Posterior vena cava (tissue), 2 donors: ENCODE measurements at regions of chr2 and their contacts with region 1.

Region 1: GRCh38 chr2:52383541-52383940 is 1351.6 kb upstream of the NRXN1 start:
- DNase-seq: no peak

Region 2: DNA sequence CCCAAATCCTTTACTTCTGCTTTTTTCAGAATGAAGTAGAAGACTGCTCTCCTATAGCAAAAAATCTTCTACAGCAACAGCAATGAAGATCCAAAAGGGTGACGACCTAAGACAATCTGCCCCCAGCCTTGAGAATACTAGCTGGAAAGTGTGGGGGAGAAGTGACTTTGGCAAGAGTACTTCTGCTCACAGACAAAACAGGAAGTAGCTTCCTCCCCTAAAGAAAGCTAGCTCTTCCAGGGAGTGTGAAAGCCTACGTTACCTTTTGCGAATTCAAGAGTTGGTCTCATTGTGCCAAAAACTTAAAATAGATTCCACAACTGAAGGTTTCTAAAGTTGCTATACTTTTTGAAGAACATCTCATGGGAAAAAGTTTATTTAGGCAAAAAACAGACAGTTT is 314.9 kb after region 1 on chr2:
- intact Hi-C with region 1: loop called in 1 of 2 experiments (anchors 5 kb)
- DNase-seq: no peak

Region 3: DNA sequence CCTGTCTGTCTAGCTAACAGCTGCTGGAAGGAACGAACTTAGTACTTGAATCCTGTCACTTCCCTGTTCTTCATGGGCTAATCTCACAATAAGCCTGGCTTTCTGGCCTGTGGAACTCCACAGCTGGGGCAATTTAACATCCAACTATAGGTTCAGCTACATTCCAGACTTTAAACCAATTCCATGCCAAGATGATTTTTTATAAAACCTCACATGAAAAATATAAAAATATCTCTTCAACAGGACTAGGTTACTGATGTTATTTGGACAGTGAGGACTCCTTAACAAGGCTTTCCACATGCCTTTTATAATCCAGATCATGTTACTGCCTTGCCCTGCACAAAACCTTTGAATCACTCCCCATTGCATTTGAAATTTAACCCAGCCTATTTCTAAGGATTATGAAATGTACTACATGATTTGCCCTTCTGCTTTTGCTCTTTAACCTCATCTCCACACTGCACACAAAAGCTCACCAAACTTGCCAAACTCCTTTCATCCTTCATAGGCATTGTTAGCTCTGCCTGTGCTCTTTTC is 520.9 kb after region 1 on chr2:
- intact Hi-C with region 1: no loop called
- DNase-seq: no peak